ENCODE measurements at regions of chr18 and their contacts with region 1.

Region 1: GRCh38 chr18:76620321-76621170 is 125.5 kb upstream of the ZNF516 start:
- DNase-seq: peak; percentile 73
- H3K4me3 Mint-ChIP-seq: peak overlapping the region; percentile 50
- H3K27ac Mint-ChIP-seq: no peak overlapping the region
- H3K4me1 Mint-ChIP-seq: peaks cover 14% of the 10 kb centered on the region
- H3K27me3 Mint-ChIP-seq: peaks cover 19% of the 10 kb centered on the region
- CTCF ChIP-seq: peak; percentile 63

Region 2: GRCh38 chr18:75896865-75897264 is 723.7 kb before region 1 on chr18:
- CTCF ChIA-PET with region 1: no interaction called
- intact Hi-C with region 1: loop called (anchors 5 kb)
- DNase-seq: no peak
- H3K4me3 Mint-ChIP-seq: no peak overlapping the region
- H3K27ac Mint-ChIP-seq: no peak overlapping the region
- H3K4me1 Mint-ChIP-seq: no peaks in the 10 kb centered on the region
- H3K27me3 Mint-ChIP-seq: no peaks in the 10 kb centered on the region
- CTCF ChIP-seq: no peak

Region 3: GRCh38 chr18:76398896-76399612 is 221.5 kb before region 1 on chr18:
- CTCF ChIA-PET with region 1: interaction called, 6 read pairs
- intact Hi-C with region 1: loop called (anchors 2 kb)
- DNase-seq: peak; percentile 77
- H3K4me3 Mint-ChIP-seq: no peak overlapping the region
- H3K27ac Mint-ChIP-seq: no peak overlapping the region
- H3K4me1 Mint-ChIP-seq: peaks cover 5% of the 10 kb centered on the region
- H3K27me3 Mint-ChIP-seq: no peaks in the 10 kb centered on the region
- CTCF ChIP-seq: peak; percentile 87

Region 4: DNA sequence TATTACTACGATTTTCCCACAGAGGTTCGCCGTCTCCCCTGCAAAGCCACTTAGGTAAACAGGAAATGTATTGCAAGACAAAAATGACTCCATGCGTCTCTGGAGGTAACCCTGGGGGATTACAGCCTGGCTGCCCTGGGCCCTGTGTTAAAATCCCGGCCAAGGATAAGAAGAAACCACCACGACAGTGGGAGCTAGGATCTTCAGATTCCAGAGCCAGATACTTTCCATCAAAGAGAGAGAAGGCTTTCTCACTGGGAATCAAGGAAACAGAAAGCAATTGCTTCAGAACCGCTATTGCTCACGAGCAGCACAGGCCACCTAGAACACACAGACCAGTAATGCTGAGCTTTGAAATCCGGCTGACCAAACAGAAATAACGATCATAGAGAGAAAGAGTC is 27.6 kb before region 1 on chr18:
- CTCF ChIA-PET with region 1: interaction called, 10 read pairs
- intact Hi-C with region 1: no loop called
- DNase-seq: no peak
- H3K4me3 Mint-ChIP-seq: no peak overlapping the region
- H3K27ac Mint-ChIP-seq: no peak overlapping the region
- H3K4me1 Mint-ChIP-seq: peaks cover 16% of the 10 kb centered on the region
- H3K27me3 Mint-ChIP-seq: peaks cover 21% of the 10 kb centered on the region
- CTCF ChIP-seq: no peak

Region 5: DNA sequence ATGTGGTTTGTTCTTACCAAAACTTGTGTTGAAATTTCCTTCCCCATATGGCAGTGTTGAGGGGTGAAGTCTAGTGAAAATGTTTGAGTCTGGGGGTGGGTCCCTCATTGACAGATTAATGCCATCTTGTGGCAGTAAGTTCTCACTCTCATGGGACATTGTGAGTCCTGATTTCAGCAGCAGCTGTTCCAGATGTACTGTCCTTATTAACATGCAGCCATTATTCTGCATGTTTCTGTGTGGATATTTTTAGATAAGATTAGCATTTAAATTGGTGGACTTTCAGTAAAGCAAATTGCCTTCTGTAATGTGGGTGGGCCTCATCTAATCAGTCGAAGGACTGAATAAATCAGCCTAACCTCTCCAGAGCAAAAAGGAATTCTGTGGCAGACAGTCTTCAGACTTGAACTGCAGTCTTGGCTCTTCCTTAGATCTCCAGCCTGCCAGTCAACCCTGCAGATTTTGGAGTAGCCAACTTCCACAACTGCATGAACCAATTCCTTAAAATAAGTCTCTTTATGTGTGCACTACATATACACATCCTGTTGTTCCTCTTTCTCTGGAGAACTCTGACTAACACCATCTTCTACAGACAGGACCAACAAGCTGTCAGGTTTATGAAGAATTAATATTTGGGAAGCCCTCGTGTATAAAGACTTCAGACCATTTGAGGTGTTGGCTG is 13.2 kb after region 1 on chr18:
- CTCF ChIA-PET with region 1: no interaction called
- intact Hi-C with region 1: no loop called
- DNase-seq: no peak
- H3K4me3 Mint-ChIP-seq: no peak overlapping the region
- H3K27ac Mint-ChIP-seq: no peak overlapping the region
- H3K4me1 Mint-ChIP-seq: peaks cover 8% of the 10 kb centered on the region
- H3K27me3 Mint-ChIP-seq: peaks cover 40% of the 10 kb centered on the region
- CTCF ChIP-seq: no peak

Region 6: DNA sequence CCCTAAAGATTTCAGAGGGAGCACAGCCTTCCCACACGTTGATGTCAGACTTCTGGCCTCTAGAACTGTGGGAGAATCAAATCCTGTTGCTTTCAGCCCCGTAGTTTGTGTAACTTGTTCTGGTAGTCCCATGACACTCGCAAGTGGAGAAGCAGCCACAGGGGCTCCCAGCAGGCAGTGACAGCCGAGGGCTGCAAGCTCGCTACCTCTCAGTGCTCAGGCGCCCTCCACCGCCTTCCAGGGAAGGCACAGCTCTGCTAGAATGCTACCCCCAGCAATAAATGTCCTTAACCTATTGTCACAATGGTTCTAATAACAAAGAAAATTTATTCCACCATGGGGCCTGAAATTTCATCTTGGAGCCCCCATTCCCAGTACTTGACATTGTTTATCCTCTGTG is 58.7 kb after region 1 on chr18:
- CTCF ChIA-PET with region 1: no interaction called
- intact Hi-C with region 1: no loop called
- DNase-seq: no peak
- H3K4me3 Mint-ChIP-seq: no peak overlapping the region
- H3K27ac Mint-ChIP-seq: peak overlapping the region; percentile 35
- H3K4me1 Mint-ChIP-seq: no peaks in the 10 kb centered on the region
- H3K27me3 Mint-ChIP-seq: peaks cover 61% of the 10 kb centered on the region
- CTCF ChIP-seq: no peak